Naive thymus-derived CD4-positive, alpha-beta T cell (primary cell): ENCODE measurements at regions of chr1 and their contacts with region 1.

Region 1: GRCh38 chr1:168342572-168343280 is 62.0 kb downstream of the TBX19 start:
- DNase-seq: peak; percentile 66 to 90 (median 86)
- ATAC-seq: peak; percentile 100
- H3K4me3 ChIP-seq: peak overlapping the region; percentile 30
- H3K4me3 Mint-ChIP-seq: peak overlapping the region in 9 of 10 donors; percentile 5 to 66 (median 57)
- H3K27ac ChIP-seq: peak overlapping the region; percentile 12
- H3K27ac Mint-ChIP-seq: peak overlapping the region; percentile 80 to 96 (median 90)
- H3K4me1 ChIP-seq: peaks cover 0 to 33% of the 10 kb centered on the region in 2 donors
- H3K4me1 Mint-ChIP-seq: peaks cover 13 to 55% (median 31%) of the 10 kb centered on the region in 7 donors
- H3K27me3 ChIP-seq: no peaks in the 10 kb centered on the region
- H3K27me3 Mint-ChIP-seq: no peaks in the 10 kb centered on the region

Region 2: DNA sequence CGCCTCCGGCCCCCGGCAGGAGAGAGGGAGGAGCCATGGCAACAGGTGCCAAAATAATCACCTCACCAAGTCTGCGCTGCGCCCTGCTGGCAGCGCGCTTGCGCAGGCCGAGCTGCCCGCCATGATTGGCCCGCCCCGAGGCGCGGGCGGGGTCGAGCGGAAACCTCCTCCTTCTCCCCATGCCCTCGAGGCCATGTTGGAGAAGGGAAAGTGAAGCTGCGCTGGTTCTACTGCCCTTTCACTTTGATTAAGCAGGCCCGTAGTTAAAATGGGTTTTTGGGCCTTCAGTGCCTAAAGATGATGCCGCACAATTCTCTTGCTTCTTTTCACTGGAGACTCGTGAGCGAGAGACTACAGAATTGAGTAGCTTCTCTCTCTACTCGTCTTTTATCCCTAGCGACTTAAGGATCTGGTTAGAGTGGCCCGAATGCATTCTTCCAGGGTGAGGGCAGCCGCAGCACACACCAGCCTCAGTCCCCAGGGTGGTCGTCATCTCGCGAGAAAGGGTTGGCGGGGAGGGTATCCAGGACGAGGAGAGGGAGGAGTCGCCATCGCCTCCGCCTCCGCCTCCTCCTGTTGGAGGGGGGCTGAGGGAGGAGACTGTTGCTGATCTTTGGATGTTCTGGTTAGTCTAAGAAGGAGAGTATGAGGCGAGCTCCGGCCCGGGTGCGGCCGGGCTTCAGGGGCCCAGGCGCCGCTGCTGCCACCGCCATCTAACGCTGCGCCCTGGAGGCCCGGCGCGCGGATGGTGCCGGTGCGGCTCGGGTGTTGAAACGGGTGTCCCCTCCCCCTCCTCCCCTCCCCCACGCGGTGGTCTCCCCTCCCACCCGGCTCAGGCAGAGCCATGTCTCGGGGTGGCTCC is 406.4 kb before region 1 on chr1 and contains the start of gene DCAF6:
- CTCF ChIA-PET with region 1: no interaction called
- POLR2A ChIA-PET with region 1: no interaction called
- intact Hi-C with region 1: loop called in 1 of 2 experiments (anchors 5 kb)
- DNase-seq: peak; percentile 94 to 99 (median 99)
- ATAC-seq: peak; percentile 89
- H3K4me3 ChIP-seq: peak within 1 kb of the TSS; percentile 89
- H3K4me3 Mint-ChIP-seq: peak within 1 kb of the TSS; percentile 90 to 99 (median 96)
- H3K27ac ChIP-seq: peak within 1 kb of the TSS; percentile 89
- H3K27ac Mint-ChIP-seq: peak within 1 kb of the TSS; percentile 90 to 100 (median 99)
- H3K4me1 ChIP-seq: peaks cover 18 to 31% of the 10 kb centered on the region in 2 donors
- H3K4me1 Mint-ChIP-seq: peaks cover 29 to 58% (median 40%) of the 10 kb centered on the region in 7 donors
- H3K27me3 ChIP-seq: no peaks in the 10 kb centered on the region
- H3K27me3 Mint-ChIP-seq: no peaks in the 10 kb centered on the region
- total RNA-seq, gene DCAF6: 27.4 to 32.7 (median 29.1) TPM

Region 3: GRCh38 chr1:168280296-168280927 is 62.3 kb before region 1 on chr1 and contains the start of gene TBX19:
- CTCF ChIA-PET with region 1: no interaction called
- POLR2A ChIA-PET with region 1: no interaction called
- intact Hi-C with region 1: no loop called
- DNase-seq: no peak
- ATAC-seq: no peak
- H3K4me3 ChIP-seq: no peak within 1 kb of the TSS
- H3K4me3 Mint-ChIP-seq: no peak within 1 kb of the TSS
- H3K27ac ChIP-seq: no peak within 1 kb of the TSS
- H3K27ac Mint-ChIP-seq: no peak within 1 kb of the TSS
- H3K4me1 ChIP-seq: no peaks in the 10 kb centered on the region
- H3K4me1 Mint-ChIP-seq: peaks cover 3 to 13% (median 7%) of the 10 kb centered on the region in 7 donors
- H3K27me3 ChIP-seq: no peaks in the 10 kb centered on the region
- H3K27me3 Mint-ChIP-seq: peaks cover 0 to 5% (median 0%) of the 10 kb centered on the region in 5 donors
- total RNA-seq, gene TBX19: 1.8 to 4.5 (median 3.8) TPM

Region 4: GRCh38 chr1:168365719-168366479 is 23.2 kb after region 1 on chr1:
- CTCF ChIA-PET with region 1: interaction called, 68 read pairs
- POLR2A ChIA-PET with region 1: interaction called, 4 read pairs
- intact Hi-C with region 1: loop called (anchors 1 kb)
- DNase-seq: peak in 5 of 9 donors; percentile 19 to 42 (median 41)
- ATAC-seq: peak; percentile 24
- H3K4me3 ChIP-seq: no peak overlapping the region
- H3K4me3 Mint-ChIP-seq: no peak overlapping the region
- H3K27ac ChIP-seq: no peak overlapping the region
- H3K27ac Mint-ChIP-seq: peak overlapping the region in 1 of 9 donors; percentile 0
- H3K4me1 ChIP-seq: peaks cover 4 to 37% of the 10 kb centered on the region in 2 donors
- H3K4me1 Mint-ChIP-seq: peaks cover 8 to 40% (median 10%) of the 10 kb centered on the region in 7 donors
- H3K27me3 ChIP-seq: no peaks in the 10 kb centered on the region
- H3K27me3 Mint-ChIP-seq: peaks cover 0 to 13% (median 5%) of the 10 kb centered on the region in 5 donors

Region 5: GRCh38 chr1:168439456-168440375 is 97.0 kb after region 1 on chr1:
- CTCF ChIA-PET with region 1: interaction called, 19 read pairs
- POLR2A ChIA-PET with region 1: no interaction called
- intact Hi-C with region 1: loop called (anchors 1 kb)
- DNase-seq: peak; percentile 45 to 86 (median 80)
- ATAC-seq: peak; percentile 95
- H3K4me3 ChIP-seq: peak overlapping the region; percentile 46
- H3K4me3 Mint-ChIP-seq: peak overlapping the region; percentile 48 to 88 (median 79)
- H3K27ac ChIP-seq: peak overlapping the region; percentile 17
- H3K27ac Mint-ChIP-seq: peak overlapping the region; percentile 20 to 91 (median 59)
- H3K4me1 ChIP-seq: peaks cover 28 to 43% of the 10 kb centered on the region in 2 donors
- H3K4me1 Mint-ChIP-seq: peaks cover 32 to 62% (median 45%) of the 10 kb centered on the region in 7 donors
- H3K27me3 ChIP-seq: no peaks in the 10 kb centered on the region
- H3K27me3 Mint-ChIP-seq: peaks cover 0 to 3% (median 0%) of the 10 kb centered on the region in 5 donors

Region 6: GRCh38 chr1:169106095-169106920 is 763.6 kb after region 1 on chr1 and contains the start of gene ATP1B1:
- CTCF ChIA-PET with region 1: no interaction called
- POLR2A ChIA-PET with region 1: no interaction called
- intact Hi-C with region 1: loop called (anchors 1 to 5 kb)
- DNase-seq: peak; percentile 66 to 90 (median 76)
- ATAC-seq: peak; percentile 95
- H3K4me3 ChIP-seq: peak within 1 kb of the TSS; percentile 67
- H3K4me3 Mint-ChIP-seq: peak within 1 kb of the TSS; percentile 81 to 93 (median 88)
- H3K27ac ChIP-seq: peak within 1 kb of the TSS; percentile 58
- H3K27ac Mint-ChIP-seq: peak within 1 kb of the TSS in 8 of 9 donors; percentile 29 to 85 (median 56)
- H3K4me1 ChIP-seq: peaks cover 7 to 21% of the 10 kb centered on the region in 2 donors
- H3K4me1 Mint-ChIP-seq: peaks cover 24 to 48% (median 40%) of the 10 kb centered on the region in 7 donors
- H3K27me3 ChIP-seq: no peaks in the 10 kb centered on the region
- H3K27me3 Mint-ChIP-seq: peaks cover 0 to 19% (median 0%) of the 10 kb centered on the region in 5 donors
- total RNA-seq, gene ATP1B1: 1.8 to 10.6 (median 2.3) TPM

Region 7: DNA sequence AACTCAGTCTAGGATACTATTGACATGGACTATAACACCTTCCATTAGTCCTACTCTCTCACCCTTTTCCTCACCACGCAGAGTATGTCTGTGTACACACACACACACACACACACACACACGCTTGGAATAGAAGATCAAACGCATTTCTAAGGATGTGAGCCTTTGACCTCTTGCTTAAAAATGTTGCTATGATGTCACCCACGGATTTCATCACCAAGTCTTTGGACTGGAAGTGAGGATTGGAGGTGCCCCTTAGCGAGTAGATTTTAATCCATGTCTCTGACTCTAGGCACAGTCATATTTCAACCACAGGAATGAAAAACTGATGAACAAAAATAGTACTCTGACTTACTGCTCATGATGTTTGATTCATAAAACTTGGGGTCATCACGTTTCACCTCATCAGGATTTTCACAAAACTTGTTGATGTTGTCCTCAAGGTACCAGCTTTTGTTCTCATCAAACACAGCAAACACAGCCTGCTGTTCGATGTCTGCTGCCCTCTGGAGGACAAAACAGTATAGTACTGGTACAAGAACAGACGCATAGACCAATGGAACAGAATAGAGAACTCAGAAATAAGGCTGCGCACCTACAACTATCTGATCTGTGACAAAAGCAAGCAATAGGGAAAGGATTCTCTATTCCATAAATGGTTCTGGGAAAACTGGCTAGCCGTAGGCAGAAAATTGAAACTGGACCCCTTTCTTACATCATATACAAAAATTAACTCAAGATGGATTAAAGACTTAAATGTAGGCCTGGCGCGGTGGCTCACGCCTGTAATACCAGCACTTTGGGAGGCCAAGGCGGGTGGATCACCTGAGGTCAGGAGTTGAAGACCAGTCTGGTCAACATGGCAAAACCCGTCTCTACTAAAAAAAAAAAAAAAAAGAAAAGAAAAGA is 1203.6 kb after region 1 on chr1:
- CTCF ChIA-PET with region 1: no interaction called
- POLR2A ChIA-PET with region 1: no interaction called
- intact Hi-C with region 1: loop called (anchors 1 kb)
- DNase-seq: peak in 7 of 9 donors; percentile 40 to 73 (median 68)
- ATAC-seq: peak; percentile 92
- H3K4me3 ChIP-seq: no peak overlapping the region
- H3K4me3 Mint-ChIP-seq: no peak overlapping the region
- H3K27ac ChIP-seq: no peak overlapping the region
- H3K27ac Mint-ChIP-seq: peak overlapping the region in 1 of 9 donors; percentile 7
- H3K4me1 ChIP-seq: no peaks in the 10 kb centered on the region
- H3K4me1 Mint-ChIP-seq: peaks cover 0 to 14% (median 0%) of the 10 kb centered on the region in 7 donors
- H3K27me3 ChIP-seq: no peaks in the 10 kb centered on the region
- H3K27me3 Mint-ChIP-seq: no peaks in the 10 kb centered on the region